Vagina (tissue), 2 donors: ENCODE measurements at regions of chr10 and their contacts with region 1.

Region 1: DNA sequence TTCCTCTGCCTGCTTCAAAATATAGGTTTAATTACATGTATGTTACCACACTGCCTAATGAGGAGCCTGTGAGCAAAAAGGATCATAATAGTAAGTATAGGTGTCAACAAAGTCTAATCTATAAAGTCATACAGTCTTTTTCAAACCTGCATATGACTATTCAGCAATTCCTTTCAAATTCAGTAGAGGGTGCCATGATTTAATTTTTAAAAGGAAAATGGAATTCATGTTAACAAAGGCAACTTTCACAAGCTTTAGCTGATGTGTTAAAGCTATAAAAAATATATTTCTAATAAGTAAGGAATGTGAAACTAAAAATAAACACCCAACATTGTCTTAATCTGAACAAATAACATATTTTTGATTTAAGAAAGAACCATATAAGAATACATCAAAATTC is 52.1 kb downstream of the MPP7 start:
- DNase-seq: no peak
- H3K4me3 ChIP-seq: no peak overlapping the region
- H3K27ac ChIP-seq: no peak overlapping the region
- H3K4me1 ChIP-seq: peaks cover 15% of the 10 kb centered on the region
- H3K27me3 ChIP-seq: no peaks in the 10 kb centered on the region
- CTCF ChIP-seq: peak in 2 of 3 experiments; percentile 24 to 32
- POLR2A ChIP-seq: no peak

Region 2: GRCh38 chr10:28381903-28382347 is 131.1 kb after region 1 on chr10:
- intact Hi-C with region 1: loop called (anchors 5 kb)
- DNase-seq: no peak
- H3K4me3 ChIP-seq: no peak overlapping the region
- H3K27ac ChIP-seq: no peak overlapping the region
- H3K4me1 ChIP-seq: peaks cover 5% of the 10 kb centered on the region
- H3K27me3 ChIP-seq: no peaks in the 10 kb centered on the region
- CTCF ChIP-seq: peak; percentile 80 to 95 (median 85)
- POLR2A ChIP-seq: no peak

Region 3: GRCh38 chr10:29239569-29240472 is 989.0 kb after region 1 on chr10:
- intact Hi-C with region 1: no loop called
- DNase-seq: no peak
- H3K4me3 ChIP-seq: no peak overlapping the region
- H3K27ac ChIP-seq: no peak overlapping the region
- H3K4me1 ChIP-seq: no peaks in the 10 kb centered on the region
- H3K27me3 ChIP-seq: no peaks in the 10 kb centered on the region
- CTCF ChIP-seq: no peak
- POLR2A ChIP-seq: no peak